K562 (cell line): ENCODE measurements at regions of chr14 and their contacts with region 1.

Region 1: GRCh38 chr14:64891839-64892375 is 12.2 kb upstream of the SPTB start:
- DNase-seq: peak in 3 of 4 experiments; percentile 23 to 72 (median 30)
- ATAC-seq: peak; percentile 94
- H3K4me3 ChIP-seq: no peak overlapping the region
- H3K27ac ChIP-seq: no peak overlapping the region
- H3K4me1 ChIP-seq: no peaks in the 10 kb centered on the region; a peak in 3 of 5 replicates
- H3K27me3 ChIP-seq: no peaks in the 10 kb centered on the region
- CTCF ChIP-seq: peak; percentile 53 to 75 (median 61); a peak in 5 of 6 replicates
- EP300 ChIP-seq: no peak
- POLR2A ChIP-seq: no peak
- RAD21 ChIP-seq: peak; percentile 92 to 99

Region 2: GRCh38 chr14:64764641-64765520 is 127.0 kb before region 1 on chr14:
- CTCF ChIA-PET with region 1: interaction called, 10 read pairs
- POLR2A ChIA-PET with region 1: no interaction called
- in situ Hi-C with region 1: no loop called
- intact Hi-C with region 1: loop called (anchors 5 kb)
- DNase-seq: peak; percentile 55 to 66 (median 63)
- ATAC-seq: peak; percentile 71
- H3K4me3 ChIP-seq: no peak overlapping the region
- H3K27ac ChIP-seq: no peak overlapping the region
- H3K4me1 ChIP-seq: peaks cover 12 to 30% of the 10 kb centered on the region in 2 experiments; a peak in 4 of 5 replicates
- H3K27me3 ChIP-seq: no peaks in the 10 kb centered on the region
- CTCF ChIP-seq: peak; percentile 62 to 71 (median 63)
- EP300 ChIP-seq: no peak
- POLR2A ChIP-seq: no peak
- RAD21 ChIP-seq: peak; percentile 29 to 56

Region 3: GRCh38 chr14:64800000-64800399 is 91.9 kb before region 1 on chr14:
- CTCF ChIA-PET with region 1: interaction called, 12 read pairs
- POLR2A ChIA-PET with region 1: no interaction called
- in situ Hi-C with region 1: no loop called
- intact Hi-C with region 1: loop called (anchors 5 kb)
- DNase-seq: no peak
- ATAC-seq: no peak
- H3K4me3 ChIP-seq: no peak overlapping the region
- H3K27ac ChIP-seq: no peak overlapping the region
- H3K4me1 ChIP-seq: no peaks in the 10 kb centered on the region
- H3K27me3 ChIP-seq: no peaks in the 10 kb centered on the region
- CTCF ChIP-seq: peak in 2 of 3 experiments; percentile 6 to 13; a peak in 1 of 6 replicates
- EP300 ChIP-seq: no peak
- POLR2A ChIP-seq: no peak
- RAD21 ChIP-seq: no peak

Region 4: GRCh38 chr14:64823305-64823861 is 68.5 kb before region 1 on chr14:
- CTCF ChIA-PET with region 1: interaction called, 44 read pairs
- POLR2A ChIA-PET with region 1: no interaction called
- in situ Hi-C with region 1: loop called (anchors 5 kb)
- intact Hi-C with region 1: loop called (anchors 5 kb)
- DNase-seq: peak; percentile 64 to 77 (median 72)
- ATAC-seq: peak; percentile 92
- H3K4me3 ChIP-seq: no peak overlapping the region
- H3K27ac ChIP-seq: no peak overlapping the region
- H3K4me1 ChIP-seq: peaks cover 24 to 36% of the 10 kb centered on the region in 2 experiments; a peak in 4 of 5 replicates
- H3K27me3 ChIP-seq: no peaks in the 10 kb centered on the region
- CTCF ChIP-seq: peak; percentile 62 to 82 (median 72)
- EP300 ChIP-seq: no peak
- POLR2A ChIP-seq: no peak
- RAD21 ChIP-seq: peak; percentile 77 to 93